Calu3 (cell line): ENCODE measurements at regions of chr1 and their contacts with region 1.

Region 1: DNA sequence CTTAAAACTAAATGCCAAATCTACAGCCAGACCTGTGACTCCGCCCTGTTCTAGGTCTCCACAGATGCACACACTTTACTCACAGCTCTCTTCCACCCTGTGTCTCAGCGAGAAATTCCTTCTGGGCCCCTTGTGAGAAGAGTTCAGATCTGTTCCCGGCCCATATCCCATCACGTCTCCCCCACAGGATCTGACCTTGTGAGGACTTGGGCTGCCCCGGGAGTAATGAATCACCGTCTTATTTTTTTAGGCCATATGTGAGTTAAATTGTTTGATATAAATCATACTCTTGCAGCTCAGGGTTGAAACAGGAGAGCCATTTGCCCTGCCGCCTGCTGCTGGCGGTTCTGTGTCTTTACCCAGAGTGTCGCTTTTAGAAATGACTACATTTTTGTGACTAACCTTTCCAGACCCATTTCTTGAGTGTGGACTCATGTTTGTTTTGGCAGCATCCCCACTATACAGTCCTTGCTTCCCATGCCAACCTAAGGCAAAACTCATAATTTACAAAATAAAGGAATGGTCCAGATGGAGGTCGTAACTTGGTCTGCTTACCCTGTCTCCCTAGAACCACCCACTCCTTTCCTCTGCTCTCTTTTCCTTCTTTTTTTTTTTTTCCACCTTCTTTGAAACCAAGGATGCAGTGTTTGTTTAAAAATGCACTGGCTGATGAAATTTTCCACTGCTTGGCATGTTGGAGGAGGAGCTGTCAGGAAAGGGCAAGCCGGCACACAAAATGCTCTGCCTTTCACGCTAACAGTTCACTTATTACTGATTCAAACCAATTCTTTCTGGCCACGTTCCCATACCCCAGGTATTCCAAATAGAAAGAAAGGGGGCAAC is 98.0 kb upstream of the C1orf105 start:
- DNase-seq: peak; percentile 53
- H3K4me3 Mint-ChIP-seq: no peak overlapping the region
- H3K27ac Mint-ChIP-seq: no peak overlapping the region
- H3K4me1 Mint-ChIP-seq: peaks cover 11% of the 10 kb centered on the region
- H3K27me3 Mint-ChIP-seq: no peaks in the 10 kb centered on the region
- CTCF ChIP-seq: no peak

Region 2: GRCh38 chr1:171712341-171712740 is 610.1 kb before region 1 on chr1:
- CTCF ChIA-PET with region 1: no interaction called
- intact Hi-C with region 1: no loop called
- DNase-seq: no peak
- H3K4me3 Mint-ChIP-seq: no peak overlapping the region
- H3K27ac Mint-ChIP-seq: no peak overlapping the region
- H3K4me1 Mint-ChIP-seq: no peaks in the 10 kb centered on the region
- H3K27me3 Mint-ChIP-seq: no peaks in the 10 kb centered on the region
- CTCF ChIP-seq: no peak

Region 3: DNA sequence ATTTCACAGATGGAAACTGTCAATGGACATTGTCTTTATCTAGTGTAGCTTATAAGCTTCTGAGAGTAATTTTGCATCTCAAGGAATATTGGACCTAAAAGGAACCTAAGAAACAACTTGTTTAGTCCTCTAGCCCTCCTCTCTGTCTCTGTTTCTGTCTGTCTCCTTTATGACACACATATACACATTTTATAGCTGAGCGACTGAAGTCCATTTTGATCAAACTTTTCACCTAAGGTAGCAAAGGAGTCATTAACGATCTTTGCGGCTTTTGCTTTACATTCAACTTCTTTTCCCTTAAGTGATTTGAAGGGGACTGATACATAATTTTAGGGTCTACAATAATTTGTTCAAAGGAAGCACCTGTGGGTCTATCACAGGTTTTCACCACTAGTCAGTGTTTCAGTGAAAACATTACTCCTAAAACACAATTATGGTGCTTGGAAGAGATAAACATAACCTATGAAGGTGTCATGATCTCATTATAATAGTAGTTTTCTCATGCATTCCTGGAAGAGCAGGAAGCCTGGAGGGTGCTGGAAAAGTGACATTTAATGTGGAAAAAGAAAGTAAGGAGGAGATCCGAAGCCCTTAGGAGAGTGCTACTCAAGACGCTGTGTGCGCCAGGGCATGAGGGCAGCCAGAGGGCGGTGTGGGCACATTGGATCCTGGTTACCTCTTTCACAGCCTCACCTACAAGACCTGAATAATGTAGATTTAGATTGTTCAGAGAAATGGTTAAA is 232.5 kb before region 1 on chr1:
- CTCF ChIA-PET with region 1: no interaction called
- intact Hi-C with region 1: loop called (anchors 10 kb)
- DNase-seq: peak; percentile 83
- H3K4me3 Mint-ChIP-seq: no peak overlapping the region
- H3K27ac Mint-ChIP-seq: no peak overlapping the region
- H3K4me1 Mint-ChIP-seq: peaks cover 11% of the 10 kb centered on the region
- H3K27me3 Mint-ChIP-seq: no peaks in the 10 kb centered on the region
- CTCF ChIP-seq: peak; percentile 86

Region 4: GRCh38 chr1:172351761-172352161 is 29.3 kb after region 1 on chr1:
- CTCF ChIA-PET with region 1: interaction called, 3 read pairs
- intact Hi-C with region 1: loop called (anchors 2 kb)
- DNase-seq: peak; percentile 44
- H3K4me3 Mint-ChIP-seq: no peak overlapping the region
- H3K27ac Mint-ChIP-seq: peak overlapping the region; percentile 67
- H3K4me1 Mint-ChIP-seq: peaks cover 63% of the 10 kb centered on the region
- H3K27me3 Mint-ChIP-seq: no peaks in the 10 kb centered on the region
- CTCF ChIP-seq: no peak

Region 5: DNA sequence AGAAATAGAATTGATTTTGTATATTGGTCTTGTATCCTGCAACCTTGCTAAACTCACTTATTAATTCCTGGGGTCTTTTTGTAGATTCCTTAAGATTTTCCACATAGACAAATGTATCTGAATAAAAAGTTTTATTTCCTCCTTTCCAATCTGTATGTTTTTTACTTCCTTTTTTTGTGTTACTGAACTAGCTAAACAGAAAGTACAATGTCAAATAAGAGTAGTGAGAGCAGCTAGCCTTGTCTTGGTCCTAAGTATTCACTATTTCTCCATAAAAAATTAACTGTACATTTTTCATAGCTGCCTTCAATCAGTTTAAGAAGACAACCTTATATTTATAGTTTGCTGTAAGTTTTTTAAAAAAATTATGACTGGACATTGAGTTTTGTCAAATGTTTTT is 411.4 kb after region 1 on chr1:
- CTCF ChIA-PET with region 1: no interaction called
- intact Hi-C with region 1: no loop called
- DNase-seq: no peak
- H3K4me3 Mint-ChIP-seq: no peak overlapping the region
- H3K27ac Mint-ChIP-seq: no peak overlapping the region
- H3K4me1 Mint-ChIP-seq: peaks cover 8% of the 10 kb centered on the region
- H3K27me3 Mint-ChIP-seq: no peaks in the 10 kb centered on the region
- CTCF ChIP-seq: no peak